ENCODE measurements at regions of chr6 and their contacts with region 1.

Region 1: GRCh38 chr6:3742426-3743344 is 8.8 kb downstream of the PXDC1 start:
- DNase-seq: peak in 1 of 2 donors; percentile 88
- H3K4me3 ChIP-seq: peak overlapping the region; percentile 14 to 16
- H3K27ac ChIP-seq: peak overlapping the region; percentile 100
- H3K4me1 ChIP-seq: peaks cover 97% of the 10 kb centered on the region
- H3K27me3 ChIP-seq: no peaks in the 10 kb centered on the region
- CTCF ChIP-seq: peak; percentile 96
- POLR2A ChIP-seq: no peak

Region 2: GRCh38 chr6:3721810-3722626 is 20.7 kb before region 1 on chr6:
- intact Hi-C with region 1: no loop called
- DNase-seq: no peak
- H3K4me3 ChIP-seq: no peak overlapping the region
- H3K27ac ChIP-seq: no peak overlapping the region
- H3K4me1 ChIP-seq: peaks cover 46% of the 10 kb centered on the region
- H3K27me3 ChIP-seq: no peaks in the 10 kb centered on the region
- CTCF ChIP-seq: no peak
- POLR2A ChIP-seq: no peak

Region 3: GRCh38 chr6:3868544-3868943 is 125.9 kb after region 1 on chr6:
- intact Hi-C with region 1: no loop called
- DNase-seq: no peak
- H3K4me3 ChIP-seq: no peak overlapping the region
- H3K27ac ChIP-seq: peak overlapping the region; percentile 61
- H3K4me1 ChIP-seq: peaks cover 14% of the 10 kb centered on the region
- H3K27me3 ChIP-seq: no peaks in the 10 kb centered on the region
- CTCF ChIP-seq: no peak
- POLR2A ChIP-seq: no peak

Region 4: GRCh38 chr6:3887150-3887700 is 144.5 kb after region 1 on chr6:
- intact Hi-C with region 1: loop called (anchors 10 kb)
- DNase-seq: no peak
- H3K4me3 ChIP-seq: no peak overlapping the region
- H3K27ac ChIP-seq: peak overlapping the region; percentile 44
- H3K4me1 ChIP-seq: peaks cover 34% of the 10 kb centered on the region
- H3K27me3 ChIP-seq: no peaks in the 10 kb centered on the region
- CTCF ChIP-seq: peak in 1 of 3 experiments; percentile 40
- POLR2A ChIP-seq: no peak

Region 5: DNA sequence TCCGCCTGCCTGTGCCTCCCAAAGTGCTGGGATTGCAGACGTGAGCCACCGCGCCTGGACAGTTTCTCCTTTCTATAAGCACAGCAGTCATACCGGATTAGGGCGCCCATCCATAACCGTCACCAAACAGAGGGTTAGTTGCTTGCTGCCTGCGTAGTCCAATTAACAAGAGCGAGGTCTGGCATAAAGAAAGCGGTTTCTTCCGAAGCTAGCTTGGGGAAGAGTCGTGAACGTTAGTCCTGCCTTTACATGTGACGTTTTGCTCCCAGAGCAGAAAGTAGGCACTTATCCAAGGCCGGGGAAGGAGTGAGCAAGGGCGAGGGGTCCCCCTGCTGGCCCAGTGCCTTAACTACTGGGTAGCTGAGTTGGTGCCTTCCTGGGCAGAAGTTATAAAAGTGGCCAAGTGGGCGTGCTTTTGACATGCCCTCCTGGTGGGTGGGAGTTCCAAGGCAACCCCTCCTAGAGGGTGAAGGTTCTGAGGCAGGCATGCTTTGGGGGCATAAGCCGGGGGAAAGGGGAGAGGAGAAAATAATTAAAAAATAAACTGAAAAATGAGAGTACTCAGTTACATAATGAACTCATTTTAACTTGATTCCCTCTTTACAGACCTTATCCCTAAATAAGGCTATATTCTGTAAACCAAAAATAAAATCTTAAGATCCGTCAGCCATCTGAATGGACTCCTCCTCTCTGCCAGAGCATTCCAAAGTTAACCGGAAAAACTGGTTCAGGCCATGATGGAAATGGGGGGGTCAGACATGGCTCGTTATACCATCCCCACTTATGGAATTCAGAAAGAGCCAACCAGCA is 248.2 kb after region 1 on chr6:
- intact Hi-C with region 1: loop called (anchors 5 kb)
- DNase-seq: peak in 1 of 2 donors; percentile 91
- H3K4me3 ChIP-seq: peak overlapping the region; percentile 40 to 42
- H3K27ac ChIP-seq: peak overlapping the region; percentile 73
- H3K4me1 ChIP-seq: peaks cover 18% of the 10 kb centered on the region
- H3K27me3 ChIP-seq: no peaks in the 10 kb centered on the region
- CTCF ChIP-seq: peak; percentile 57 to 68 (median 60)
- POLR2A ChIP-seq: no peak

Region 6: DNA sequence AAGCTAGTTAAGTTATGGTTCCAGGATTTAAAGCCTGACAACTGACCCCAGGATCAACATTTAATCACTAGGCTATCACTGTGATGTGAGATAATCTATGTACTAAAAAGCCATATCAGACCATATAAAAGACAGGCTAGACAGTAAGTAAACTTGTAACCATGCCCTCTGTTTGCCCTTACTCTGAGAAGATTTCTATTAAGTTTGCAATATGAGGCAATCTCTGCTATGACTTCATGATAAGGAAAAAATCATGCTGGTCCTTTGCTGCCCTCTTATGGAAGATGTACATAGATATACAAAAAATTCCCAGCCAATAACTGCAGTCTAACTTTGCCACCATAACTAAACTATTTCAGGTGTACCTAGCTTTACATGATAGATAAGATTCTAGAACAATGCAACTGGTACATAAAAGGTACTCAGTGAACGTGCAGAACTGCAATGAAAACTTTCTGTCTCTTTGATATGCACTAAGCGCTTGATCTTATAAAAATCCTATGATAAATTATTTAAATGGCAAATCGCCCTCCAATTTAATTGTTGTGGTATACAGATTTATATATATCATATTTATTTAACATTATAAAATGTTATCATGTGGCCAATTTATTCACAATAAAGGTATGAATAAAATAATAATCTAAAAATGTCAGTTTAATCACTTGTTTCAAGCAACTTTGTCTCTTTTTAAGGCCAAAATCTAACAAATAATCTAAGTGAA is 265.8 kb after region 1 on chr6:
- intact Hi-C with region 1: loop called (anchors 5 kb)
- DNase-seq: no peak
- H3K4me3 ChIP-seq: no peak overlapping the region
- H3K27ac ChIP-seq: peak overlapping the region; percentile 36
- H3K4me1 ChIP-seq: no peaks in the 10 kb centered on the region
- H3K27me3 ChIP-seq: no peaks in the 10 kb centered on the region
- CTCF ChIP-seq: peak; percentile 18 to 46 (median 34)
- POLR2A ChIP-seq: no peak